ENCODE measurements at regions of chr2 and their contacts with region 1.

Region 1: GRCh38 chr2:176126929-176127773 is 2.4 kb upstream of the HOXD8 start:
- DNase-seq: peak in 1 of 2 experiments; percentile 67
- H3K4me3 ChIP-seq: no peak overlapping the region
- H3K4me3 Mint-ChIP-seq: no peak overlapping the region
- H3K27ac Mint-ChIP-seq: no peak overlapping the region
- H3K4me1 ChIP-seq: peaks cover 29% of the 10 kb centered on the region
- H3K4me1 Mint-ChIP-seq: peaks cover 24% of the 10 kb centered on the region
- H3K27me3 ChIP-seq: peaks cover 19% of the 10 kb centered on the region
- H3K27me3 Mint-ChIP-seq: peaks cover 63% of the 10 kb centered on the region
- CTCF ChIP-seq: peak; percentile 72 to 82

Region 2: GRCh38 chr2:174878537-174879147 is 1248.5 kb before region 1 on chr2:
- CTCF ChIA-PET with region 1: no interaction called
- POLR2A ChIA-PET with region 1: no interaction called
- intact Hi-C with region 1: no loop called
- DNase-seq: no peak
- H3K4me3 ChIP-seq: no peak overlapping the region
- H3K4me3 Mint-ChIP-seq: no peak overlapping the region
- H3K27ac Mint-ChIP-seq: no peak overlapping the region
- H3K4me1 ChIP-seq: no peaks in the 10 kb centered on the region
- H3K4me1 Mint-ChIP-seq: no peaks in the 10 kb centered on the region
- H3K27me3 ChIP-seq: no peaks in the 10 kb centered on the region
- H3K27me3 Mint-ChIP-seq: peaks cover 8% of the 10 kb centered on the region
- CTCF ChIP-seq: no peak

Region 3: GRCh38 chr2:176227874-176228273 is 100.7 kb after region 1 on chr2:
- CTCF ChIA-PET with region 1: no interaction called
- POLR2A ChIA-PET with region 1: no interaction called
- intact Hi-C with region 1: no loop called
- DNase-seq: no peak
- H3K4me3 ChIP-seq: no peak overlapping the region
- H3K4me3 Mint-ChIP-seq: no peak overlapping the region
- H3K27ac Mint-ChIP-seq: no peak overlapping the region
- H3K4me1 ChIP-seq: no peaks in the 10 kb centered on the region
- H3K4me1 Mint-ChIP-seq: no peaks in the 10 kb centered on the region
- H3K27me3 ChIP-seq: no peaks in the 10 kb centered on the region; the same call in 1 of the 2 replicates
- H3K27me3 Mint-ChIP-seq: peaks cover 21% of the 10 kb centered on the region
- CTCF ChIP-seq: no peak

Region 4: GRCh38 chr2:176385838-176386237 is 258.7 kb after region 1 on chr2:
- CTCF ChIA-PET with region 1: interaction called, 3 read pairs
- POLR2A ChIA-PET with region 1: no interaction called
- intact Hi-C with region 1: loop called (anchors 10 kb)
- DNase-seq: no peak
- H3K4me3 ChIP-seq: no peak overlapping the region
- H3K4me3 Mint-ChIP-seq: no peak overlapping the region
- H3K27ac Mint-ChIP-seq: no peak overlapping the region
- H3K4me1 ChIP-seq: no peaks in the 10 kb centered on the region
- H3K4me1 Mint-ChIP-seq: no peaks in the 10 kb centered on the region
- H3K27me3 ChIP-seq: no peaks in the 10 kb centered on the region
- H3K27me3 Mint-ChIP-seq: peaks cover 22% of the 10 kb centered on the region
- CTCF ChIP-seq: peak; percentile 13 to 35

Region 5: GRCh38 chr2:176454893-176455811 is 328.0 kb after region 1 on chr2:
- CTCF ChIA-PET with region 1: interaction called, 64 read pairs
- POLR2A ChIA-PET with region 1: no interaction called
- intact Hi-C with region 1: loop called (anchors 1 kb)
- DNase-seq: peak; percentile 76 to 85
- H3K4me3 ChIP-seq: no peak overlapping the region
- H3K4me3 Mint-ChIP-seq: no peak overlapping the region
- H3K27ac Mint-ChIP-seq: no peak overlapping the region
- H3K4me1 ChIP-seq: no peaks in the 10 kb centered on the region
- H3K4me1 Mint-ChIP-seq: no peaks in the 10 kb centered on the region
- H3K27me3 ChIP-seq: no peaks in the 10 kb centered on the region
- H3K27me3 Mint-ChIP-seq: peaks cover 15% of the 10 kb centered on the region
- CTCF ChIP-seq: peak; percentile 88 to 91

Region 6: DNA sequence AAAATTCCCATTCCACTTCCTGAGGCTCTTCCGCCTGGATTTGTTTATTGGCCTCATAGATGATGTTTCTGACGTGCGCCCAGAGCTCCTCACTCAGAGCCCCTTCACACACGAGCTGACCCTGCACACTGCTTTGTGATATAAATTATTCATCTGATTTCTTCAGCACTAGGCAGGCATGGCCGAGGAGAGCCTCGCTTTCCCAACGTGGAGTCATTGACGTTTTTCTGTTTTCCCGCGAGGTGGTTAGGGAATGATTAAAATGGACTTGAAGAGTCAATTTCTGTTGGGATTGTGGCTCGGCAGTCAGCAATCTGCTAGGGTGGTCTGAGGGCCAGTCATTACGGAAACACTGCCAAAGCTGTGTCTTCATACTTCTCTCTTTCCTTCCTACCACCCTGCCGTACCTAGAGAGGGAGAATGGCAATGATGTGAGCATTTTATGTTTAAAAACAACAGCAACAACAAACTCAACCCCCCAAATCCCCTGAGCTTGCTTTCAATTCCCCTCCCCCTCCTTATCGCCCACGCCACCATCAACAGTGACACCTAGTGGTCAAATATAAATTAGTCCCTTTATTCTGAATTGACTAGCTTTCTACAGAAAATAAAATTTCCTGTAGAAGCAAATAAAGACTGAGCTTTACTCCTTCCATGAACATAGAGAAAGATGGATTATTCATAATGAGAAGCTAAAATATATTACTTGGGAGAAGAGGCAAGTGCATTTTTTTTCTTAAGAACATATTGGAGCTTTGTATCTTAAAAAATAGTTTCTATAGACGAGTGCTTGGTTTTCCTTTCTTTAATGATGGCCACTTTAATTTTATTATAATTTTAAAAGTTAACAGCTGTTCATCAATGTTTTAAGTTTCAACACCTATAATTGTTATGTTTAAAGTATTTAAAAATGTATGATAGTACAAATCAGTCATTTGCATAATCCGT is 427.2 kb after region 1 on chr2:
- CTCF ChIA-PET with region 1: interaction called, 9 read pairs
- POLR2A ChIA-PET with region 1: no interaction called
- intact Hi-C with region 1: loop called (anchors 1 kb)
- DNase-seq: peak in 1 of 2 experiments; percentile 43
- H3K4me3 ChIP-seq: no peak overlapping the region
- H3K4me3 Mint-ChIP-seq: peak overlapping the region; percentile 57
- H3K27ac Mint-ChIP-seq: no peak overlapping the region
- H3K4me1 ChIP-seq: 0 out of 2 replicates have a peak, but pooled peaks cover 4% of the 10 kb centered on the region
- H3K4me1 Mint-ChIP-seq: no peaks in the 10 kb centered on the region
- H3K27me3 ChIP-seq: no peaks in the 10 kb centered on the region; the same call in 1 of the 2 replicates
- H3K27me3 Mint-ChIP-seq: peaks cover 9% of the 10 kb centered on the region
- CTCF ChIP-seq: peak; percentile 65 to 78

Region 7: GRCh38 chr2:176638167-176639015 is 511.2 kb after region 1 on chr2:
- CTCF ChIA-PET with region 1: no interaction called
- POLR2A ChIA-PET with region 1: no interaction called
- intact Hi-C with region 1: loop called (anchors 1 kb)
- DNase-seq: peak; percentile 48 to 69
- H3K4me3 ChIP-seq: peak overlapping the region; percentile 31
- H3K4me3 Mint-ChIP-seq: peak overlapping the region; percentile 55
- H3K27ac Mint-ChIP-seq: no peak overlapping the region
- H3K4me1 ChIP-seq: no peaks in the 10 kb centered on the region
- H3K4me1 Mint-ChIP-seq: no peaks in the 10 kb centered on the region
- H3K27me3 ChIP-seq: no peaks in the 10 kb centered on the region; the same call in 1 of the 2 replicates
- H3K27me3 Mint-ChIP-seq: peaks cover 21% of the 10 kb centered on the region
- CTCF ChIP-seq: peak; percentile 72 to 82

Region 8: GRCh38 chr2:176652300-176653182 is 525.4 kb after region 1 on chr2:
- CTCF ChIA-PET with region 1: interaction called, 8 read pairs
- POLR2A ChIA-PET with region 1: no interaction called
- intact Hi-C with region 1: loop called (anchors 1 kb)
- DNase-seq: peak in 1 of 2 experiments; percentile 48
- H3K4me3 ChIP-seq: no peak overlapping the region
- H3K4me3 Mint-ChIP-seq: no peak overlapping the region
- H3K27ac Mint-ChIP-seq: no peak overlapping the region
- H3K4me1 ChIP-seq: no peaks in the 10 kb centered on the region
- H3K4me1 Mint-ChIP-seq: no peaks in the 10 kb centered on the region
- H3K27me3 ChIP-seq: peaks cover 1% of the 10 kb centered on the region; the same call in 1 of the 2 replicates
- H3K27me3 Mint-ChIP-seq: peaks cover 19% of the 10 kb centered on the region
- CTCF ChIP-seq: peak; percentile 71 to 74

Region 9: GRCh38 chr2:176814306-176815052 is 687.3 kb after region 1 on chr2:
- CTCF ChIA-PET with region 1: no interaction called
- POLR2A ChIA-PET with region 1: no interaction called
- intact Hi-C with region 1: loop called (anchors 10 kb)
- DNase-seq: peak in 1 of 2 experiments; percentile 12
- H3K4me3 ChIP-seq: no peak overlapping the region
- H3K4me3 Mint-ChIP-seq: no peak overlapping the region
- H3K27ac Mint-ChIP-seq: no peak overlapping the region
- H3K4me1 ChIP-seq: no peaks in the 10 kb centered on the region
- H3K4me1 Mint-ChIP-seq: no peaks in the 10 kb centered on the region
- H3K27me3 ChIP-seq: no peaks in the 10 kb centered on the region
- H3K27me3 Mint-ChIP-seq: peaks cover 3% of the 10 kb centered on the region
- CTCF ChIP-seq: peak in 1 of 2 experiments; percentile 56

Measured in Caco-2 (cell line).